ENCODE measurements at regions of chr10 and their contacts with region 1.

Region 1: DNA sequence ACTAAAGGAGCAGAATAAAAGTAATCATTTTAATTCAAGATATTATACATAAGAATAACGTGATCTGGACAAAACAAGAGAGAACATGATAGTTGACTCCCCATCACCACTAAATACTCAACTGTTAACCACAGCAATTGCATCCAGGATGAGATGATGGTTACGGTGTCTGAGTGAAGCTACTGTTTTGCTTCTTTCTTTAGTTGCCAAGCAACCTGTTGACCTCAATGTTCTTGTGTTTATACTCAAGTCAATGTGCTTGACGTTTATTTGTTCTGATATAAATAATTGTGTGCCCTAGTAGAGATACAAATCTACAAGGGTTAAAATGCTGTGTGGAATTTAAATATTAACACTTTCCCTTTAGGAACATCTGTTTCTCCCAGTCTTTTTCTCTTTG is 31.4 kb upstream of the MPP7 start:
- DNase-seq: peak in 9 of 10 donors; percentile 48 to 94 (median 86)
- ATAC-seq: peak; percentile 66 to 73
- H3K4me3 Mint-ChIP-seq: peak overlapping the region; percentile 87 to 97 (median 94)
- H3K27ac Mint-ChIP-seq: peak overlapping the region; percentile 95 to 100 (median 100)
- H3K4me1 Mint-ChIP-seq: peaks cover 34 to 80% (median 68%) of the 10 kb centered on the region in 4 donors
- H3K27me3 Mint-ChIP-seq: no peaks in the 10 kb centered on the region

Region 2: GRCh38 chr10:28177944-28178637 is 156.2 kb before region 1 on chr10:
- POLR2A ChIA-PET with region 1: interaction called, 11 read pairs
- DNase-seq: peak in 3 of 10 donors; percentile 28 to 30 (median 29)
- ATAC-seq: peak; percentile 61 to 78
- H3K4me3 Mint-ChIP-seq: peak overlapping the region; percentile 84 to 96 (median 91)
- H3K27ac Mint-ChIP-seq: peak overlapping the region; percentile 88 to 97 (median 94)
- H3K4me1 Mint-ChIP-seq: peaks cover 22 to 63% (median 45%) of the 10 kb centered on the region in 4 donors
- H3K27me3 Mint-ChIP-seq: no peaks in the 10 kb centered on the region

Region 3: DNA sequence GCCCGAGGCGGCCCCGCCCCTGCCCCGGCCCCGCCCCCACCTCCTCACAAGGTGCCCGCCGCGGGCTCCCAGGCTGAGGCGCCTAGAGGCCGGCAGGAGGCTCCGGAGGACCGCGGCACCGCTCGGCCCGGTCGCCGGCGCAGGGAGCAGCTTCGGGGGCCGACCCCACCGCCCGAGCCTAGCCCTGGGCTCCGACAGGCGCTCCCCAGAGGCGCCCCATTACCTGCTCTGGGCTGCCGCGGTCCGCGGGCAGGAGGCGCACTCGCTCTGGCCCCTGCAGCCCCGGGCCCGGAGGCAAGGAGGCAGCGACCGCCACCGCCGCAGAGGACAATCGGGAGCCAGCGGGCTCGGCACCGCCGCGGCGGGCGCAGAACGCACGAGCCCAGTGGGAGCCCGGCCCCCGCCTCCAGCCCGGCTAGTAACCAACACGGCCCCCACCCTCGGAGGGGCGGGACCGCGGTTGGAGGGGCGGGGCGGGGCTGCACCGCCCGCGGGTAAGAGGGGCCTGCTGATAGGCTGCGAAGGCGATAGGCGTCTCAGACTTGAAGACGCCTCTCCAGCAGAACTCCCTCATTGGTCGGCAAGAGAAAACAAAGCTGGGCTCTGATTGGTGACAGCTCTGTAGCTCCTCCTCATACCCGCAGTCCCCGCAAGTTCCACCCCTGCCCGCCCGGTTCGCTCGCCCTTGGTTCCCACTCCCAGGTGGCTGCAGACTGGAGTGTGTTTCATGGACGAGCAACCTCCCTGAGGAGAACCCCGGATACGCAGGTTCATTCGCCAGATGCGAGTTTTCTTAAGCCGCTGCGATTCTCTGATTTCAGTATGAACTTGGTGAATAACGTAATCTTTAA is 31.4 kb before region 1 on chr10 and contains the start of gene MPP7:
- POLR2A ChIA-PET with region 1: interaction called, 210 read pairs
- DNase-seq: peak; percentile 95 to 98 (median 97)
- ATAC-seq: peak; percentile 92 to 93
- H3K4me3 Mint-ChIP-seq: peak within 1 kb of the TSS; percentile 93 to 98 (median 96)
- H3K27ac Mint-ChIP-seq: peak within 1 kb of the TSS; percentile 78 to 99 (median 96)
- H3K4me1 Mint-ChIP-seq: peaks cover 30 to 76% (median 66%) of the 10 kb centered on the region in 4 donors
- H3K27me3 Mint-ChIP-seq: peaks cover 0 to 3% (median 0%) of the 10 kb centered on the region in 5 donors
- polyA plus RNA-seq, gene MPP7: 33.3 to 41.2 (median 40.3) TPM

Region 4: DNA sequence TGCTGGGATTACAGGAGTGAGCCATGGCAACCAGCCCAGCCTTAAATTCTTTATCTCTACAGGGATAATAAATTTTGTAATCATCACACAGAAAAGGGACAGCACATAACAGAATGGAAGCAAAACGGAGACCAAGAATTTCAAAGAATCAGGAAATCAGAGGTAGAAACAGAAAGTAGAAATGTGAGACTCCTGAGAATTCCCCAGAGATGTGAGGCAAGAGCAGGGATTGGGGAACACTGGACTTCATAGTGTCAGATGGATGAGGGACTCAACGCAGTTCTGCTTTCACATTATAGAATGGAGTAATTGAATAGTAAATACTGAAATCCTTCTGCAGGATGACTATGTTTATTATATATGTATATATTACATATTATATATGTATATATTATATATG is 21.1 kb after region 1 on chr10:
- POLR2A ChIA-PET with region 1: interaction called, 11 read pairs
- DNase-seq: no peak
- ATAC-seq: no peak
- H3K4me3 Mint-ChIP-seq: no peak overlapping the region
- H3K27ac Mint-ChIP-seq: peak overlapping the region in 3 of 10 donors; percentile 20 to 37 (median 33)
- H3K4me1 Mint-ChIP-seq: peaks cover 0 to 9% (median 2%) of the 10 kb centered on the region in 4 donors
- H3K27me3 Mint-ChIP-seq: no peaks in the 10 kb centered on the region

Region 5: DNA sequence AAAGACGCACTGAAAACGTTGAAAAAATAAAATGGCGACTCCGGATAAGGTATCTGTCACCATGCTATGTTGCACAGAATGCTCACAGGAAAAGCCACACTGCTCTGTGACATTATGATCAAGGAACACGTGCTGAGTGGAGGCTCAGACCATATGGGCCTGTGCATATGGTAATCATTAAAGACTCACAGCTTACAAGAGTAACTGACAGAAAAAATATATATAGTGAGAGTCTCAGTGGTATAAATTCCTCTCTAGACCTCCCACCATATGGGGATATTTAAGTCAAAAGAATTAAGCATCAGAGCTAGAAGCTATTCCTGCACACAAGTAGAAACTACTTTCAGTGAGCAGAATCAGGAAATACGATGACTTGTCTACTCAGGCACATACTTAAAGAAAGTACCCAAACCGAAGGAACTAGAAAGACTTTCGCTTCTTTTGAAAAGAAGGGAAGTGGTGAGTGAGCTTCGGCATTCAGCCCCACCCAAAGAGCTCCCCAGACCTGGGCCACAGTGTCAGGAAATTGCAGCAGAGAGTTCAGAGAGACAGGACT is 33.7 kb after region 1 on chr10:
- POLR2A ChIA-PET with region 1: interaction called, 199 read pairs
- DNase-seq: peak; percentile 19 to 87 (median 66)
- ATAC-seq: peak; percentile 93
- H3K4me3 Mint-ChIP-seq: peak overlapping the region; percentile 61 to 86 (median 82)
- H3K27ac Mint-ChIP-seq: peak overlapping the region; percentile 88 to 99 (median 98)
- H3K4me1 Mint-ChIP-seq: peaks cover 22 to 62% (median 59%) of the 10 kb centered on the region in 4 donors
- H3K27me3 Mint-ChIP-seq: no peaks in the 10 kb centered on the region

Region 6: GRCh38 chr10:28381903-28382347 is 47.6 kb after region 1 on chr10:
- POLR2A ChIA-PET with region 1: interaction called, 97 read pairs
- DNase-seq: peak; percentile 68 to 90 (median 80)
- ATAC-seq: peak; percentile 83 to 95
- H3K4me3 Mint-ChIP-seq: peak overlapping the region in 4 of 10 donors; percentile 5 to 63 (median 16)
- H3K27ac Mint-ChIP-seq: peak overlapping the region in 8 of 10 donors; percentile 9 to 93 (median 68)
- H3K4me1 Mint-ChIP-seq: peaks cover 16 to 39% (median 32%) of the 10 kb centered on the region in 4 donors
- H3K27me3 Mint-ChIP-seq: peaks cover 0 to 6% (median 0%) of the 10 kb centered on the region in 5 donors

Measured in naive thymus-derived CD8-positive, alpha-beta T cell (primary cell).